ENCODE measurements at regions of chr21 and their contacts with region 1.

Region 1: DNA sequence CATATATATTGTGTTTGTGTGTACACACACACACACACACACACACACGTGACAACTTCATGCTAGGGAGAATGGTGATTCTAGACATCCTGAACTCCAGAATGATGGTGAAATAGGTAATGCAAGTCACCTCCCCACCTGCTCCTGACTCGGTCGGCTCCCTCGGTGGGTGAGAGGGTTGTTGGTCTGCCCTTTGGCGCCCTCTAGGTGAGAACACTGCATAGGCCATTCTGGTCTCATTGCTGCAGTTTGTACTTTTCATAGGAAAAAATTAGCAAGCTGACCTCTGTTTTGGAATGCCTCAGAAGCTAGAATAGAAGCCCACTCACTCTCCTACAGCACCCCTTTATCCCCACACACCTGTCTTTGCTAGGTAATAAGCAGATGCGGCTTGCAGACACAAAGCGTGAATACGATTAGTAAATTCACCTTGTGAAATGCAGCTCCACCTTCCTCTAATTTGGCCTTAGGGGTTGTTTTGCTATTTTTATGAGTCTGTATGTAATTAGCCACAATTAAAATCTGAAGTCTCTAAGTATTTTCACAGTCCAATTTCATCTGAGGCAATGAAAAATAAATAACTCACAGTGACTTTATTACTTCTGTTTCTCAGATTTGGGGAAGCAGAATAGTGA is 130.0 kb upstream of the KCNJ15 start:
- DNase-seq: peak; percentile 45
- H3K4me3 ChIP-seq: no peak overlapping the region
- H3K27ac ChIP-seq: no peak overlapping the region
- H3K4me1 ChIP-seq: no peaks in the 10 kb centered on the region
- H3K27me3 ChIP-seq: peaks cover 34% of the 10 kb centered on the region
- CTCF ChIP-seq: peak; percentile 50 to 68 (median 57)
- EP300 ChIP-seq: no peak
- POLR2A ChIP-seq: no peak

Region 2: GRCh38 chr21:37700641-37701202 is 426.1 kb before region 1 on chr21:
- in situ Hi-C with region 1: loop called in 3 of 4 experiments (anchors 25 kb)
- intact Hi-C with region 1: no loop called
- DNase-seq: no peak
- H3K4me3 ChIP-seq: no peak overlapping the region
- H3K27ac ChIP-seq: no peak overlapping the region
- H3K4me1 ChIP-seq: no peaks in the 10 kb centered on the region
- H3K27me3 ChIP-seq: no peaks in the 10 kb centered on the region
- CTCF ChIP-seq: peak; percentile 29 to 51 (median 44)
- EP300 ChIP-seq: no peak
- POLR2A ChIP-seq: no peak

Region 3: GRCh38 chr21:38839328-38840286 is 712.8 kb after region 1 on chr21:
- in situ Hi-C with region 1: no loop called
- intact Hi-C with region 1: no loop called
- DNase-seq: no peak
- H3K4me3 ChIP-seq: no peak overlapping the region
- H3K27ac ChIP-seq: peak overlapping the region; percentile 24 to 30 (median 28)
- H3K4me1 ChIP-seq: peaks cover 0 to 5% (median 2%) of the 10 kb centered on the region in 4 donors
- H3K27me3 ChIP-seq: no peaks in the 10 kb centered on the region
- CTCF ChIP-seq: no peak
- EP300 ChIP-seq: no peak
- POLR2A ChIP-seq: no peak

Measured in transverse colon (tissue), 4 donors.